PC-3 (cell line): ENCODE measurements at regions of chr16 and their contacts with region 1.

Region 1: DNA sequence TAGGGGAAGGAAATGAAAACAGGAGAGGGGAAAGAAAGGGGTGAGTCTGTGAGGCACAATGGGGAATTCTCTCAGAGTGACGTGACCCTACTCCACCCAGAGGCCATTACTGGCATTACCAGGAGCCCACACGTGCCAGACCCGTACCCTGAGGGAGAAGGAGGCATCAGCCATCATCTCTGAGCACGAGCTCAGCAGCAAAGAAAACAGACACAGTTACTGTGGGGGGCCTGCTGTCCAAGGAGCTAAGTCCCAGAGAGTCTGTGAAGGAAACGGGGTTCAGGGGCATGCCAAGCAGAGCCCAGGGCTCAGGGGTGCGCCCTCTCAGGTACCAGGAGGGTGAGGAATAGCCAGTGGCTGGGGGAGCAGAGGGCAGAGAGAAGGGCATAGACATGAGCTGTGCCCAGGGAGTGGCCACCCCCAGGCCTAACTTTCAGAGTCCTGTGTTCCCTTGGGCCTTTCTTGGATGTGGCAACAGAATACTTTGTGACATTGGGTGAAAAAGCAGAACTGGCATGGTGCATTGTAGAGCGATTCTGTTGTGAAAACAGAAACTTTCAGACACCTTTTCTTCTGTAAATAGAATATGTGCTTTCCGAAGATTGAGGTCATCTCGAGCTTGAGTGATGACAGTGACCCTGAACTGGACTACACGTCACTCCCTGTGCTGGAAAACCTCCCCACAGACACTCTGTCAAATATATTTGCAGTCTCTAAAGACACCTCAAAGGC is 11.3 kb downstream of the TAF1C start:
- DNase-seq: peak; percentile 72
- ATAC-seq: peak; percentile 67
- H3K4me3 ChIP-seq: no peak overlapping the region
- H3K27ac ChIP-seq: no peak overlapping the region
- H3K4me1 ChIP-seq: peaks cover 20% of the 10 kb centered on the region
- H3K27me3 ChIP-seq: no peaks in the 10 kb centered on the region
- CTCF ChIP-seq: peak; percentile 75

Region 2: DNA sequence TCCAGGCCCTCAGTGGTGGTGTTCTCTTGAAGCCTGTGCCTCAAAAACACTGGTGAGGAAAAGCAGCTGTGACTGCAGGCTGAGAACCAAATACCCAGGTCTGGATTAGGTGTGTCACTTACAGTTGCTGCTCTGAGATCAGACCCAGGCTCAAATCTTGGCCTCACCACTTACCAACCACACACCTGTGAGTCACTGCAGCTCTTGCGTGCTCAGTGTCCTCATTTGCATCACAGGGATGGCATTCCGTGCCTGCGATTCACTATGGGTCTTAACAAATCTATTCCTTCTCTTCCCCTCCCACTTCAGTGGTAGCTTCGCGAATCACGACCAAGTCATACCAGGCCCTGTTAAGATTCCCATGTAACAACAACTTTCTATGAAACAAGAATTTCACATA is 601.1 kb before region 1 on chr16:
- CTCF ChIA-PET with region 1: no interaction called
- POLR2A ChIA-PET with region 1: no interaction called
- intact Hi-C with region 1: no loop called
- DNase-seq: peak; percentile 1
- ATAC-seq: no peak
- H3K4me3 ChIP-seq: no peak overlapping the region
- H3K27ac ChIP-seq: no peak overlapping the region
- H3K4me1 ChIP-seq: no peaks in the 10 kb centered on the region
- H3K27me3 ChIP-seq: no peaks in the 10 kb centered on the region
- CTCF ChIP-seq: no peak

Region 3: DNA sequence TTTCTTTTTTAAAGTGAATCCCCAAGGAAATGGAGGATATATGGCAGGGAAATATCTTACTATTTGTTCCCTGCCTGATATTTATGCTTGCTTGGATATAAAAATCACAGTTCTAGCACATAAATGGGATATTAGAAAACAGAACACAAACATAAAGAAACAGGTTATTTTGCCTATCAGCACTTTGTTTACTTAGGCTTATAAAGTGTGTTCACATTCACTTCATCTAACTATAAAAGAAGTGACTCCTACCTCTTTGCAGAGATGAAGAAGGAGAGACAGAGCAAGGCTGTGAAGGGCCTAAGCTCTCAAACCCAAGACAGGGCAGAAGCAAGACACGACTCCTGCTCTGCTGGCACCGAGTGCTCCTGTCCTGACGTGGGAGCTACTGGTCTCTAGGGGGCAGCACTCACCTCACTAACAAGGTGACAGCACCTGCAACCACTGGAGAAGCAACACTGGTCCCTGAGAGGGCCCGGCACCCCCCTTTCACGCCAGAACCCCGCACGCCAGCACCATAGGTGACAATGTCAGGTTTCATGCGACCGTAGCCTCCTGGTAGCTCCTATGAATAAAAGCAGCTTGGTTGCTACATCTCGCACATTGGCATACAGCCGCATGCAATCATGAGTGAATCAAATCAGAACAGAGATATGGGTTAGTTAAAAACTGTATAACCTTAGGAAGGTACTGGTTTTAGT is 90.8 kb before region 1 on chr16:
- CTCF ChIA-PET with region 1: no interaction called
- POLR2A ChIA-PET with region 1: no interaction called
- intact Hi-C with region 1: loop called (anchors 1 kb)
- DNase-seq: peak; percentile 67
- ATAC-seq: peak; percentile 99
- H3K4me3 ChIP-seq: no peak overlapping the region
- H3K27ac ChIP-seq: no peak overlapping the region
- H3K4me1 ChIP-seq: no peaks in the 10 kb centered on the region
- H3K27me3 ChIP-seq: no peaks in the 10 kb centered on the region
- CTCF ChIP-seq: peak; percentile 78